Mucosa of descending colon (tissue), 3 donors: ENCODE measurements at regions of chr6 and their contacts with region 1.

Region 1: GRCh38 chr6:139375232-139376016 is 976 bp upstream of the CITED2 start:
- DNase-seq: peak; percentile 93 to 96 (median 94)
- ATAC-seq: peak; percentile 83
- H3K4me3 ChIP-seq: peak overlapping the region; percentile 95
- H3K4me1 ChIP-seq: peaks cover 16% of the 10 kb centered on the region
- CTCF ChIP-seq: no peak

Region 2: DNA sequence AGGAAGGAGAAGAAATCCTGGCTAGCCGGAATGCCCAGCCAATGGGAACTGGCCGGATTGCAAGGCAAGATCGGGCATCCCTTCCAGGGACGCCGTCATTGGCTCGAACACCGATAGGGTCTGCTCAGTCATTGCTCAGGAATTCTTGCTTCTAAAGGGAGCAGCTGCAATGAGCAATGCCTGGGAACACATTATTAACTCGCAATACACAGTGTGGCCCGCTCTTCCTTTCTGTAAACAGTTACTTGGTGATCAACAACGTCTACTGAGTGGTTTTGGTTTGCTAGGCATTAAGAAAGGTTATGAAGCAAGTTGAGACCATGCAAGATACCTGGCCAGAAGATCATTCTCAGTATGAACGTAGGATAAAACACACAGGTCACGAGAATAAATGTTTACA is 164.4 kb after region 1 on chr6:
- intact Hi-C with region 1: loop called in 1 of 2 experiments (anchors 10 kb)
- DNase-seq: peak; percentile 34 to 54 (median 42)
- ATAC-seq: peak; percentile 35
- H3K4me3 ChIP-seq: no peak overlapping the region
- H3K4me1 ChIP-seq: peaks cover 34% of the 10 kb centered on the region
- CTCF ChIP-seq: no peak

Region 3: DNA sequence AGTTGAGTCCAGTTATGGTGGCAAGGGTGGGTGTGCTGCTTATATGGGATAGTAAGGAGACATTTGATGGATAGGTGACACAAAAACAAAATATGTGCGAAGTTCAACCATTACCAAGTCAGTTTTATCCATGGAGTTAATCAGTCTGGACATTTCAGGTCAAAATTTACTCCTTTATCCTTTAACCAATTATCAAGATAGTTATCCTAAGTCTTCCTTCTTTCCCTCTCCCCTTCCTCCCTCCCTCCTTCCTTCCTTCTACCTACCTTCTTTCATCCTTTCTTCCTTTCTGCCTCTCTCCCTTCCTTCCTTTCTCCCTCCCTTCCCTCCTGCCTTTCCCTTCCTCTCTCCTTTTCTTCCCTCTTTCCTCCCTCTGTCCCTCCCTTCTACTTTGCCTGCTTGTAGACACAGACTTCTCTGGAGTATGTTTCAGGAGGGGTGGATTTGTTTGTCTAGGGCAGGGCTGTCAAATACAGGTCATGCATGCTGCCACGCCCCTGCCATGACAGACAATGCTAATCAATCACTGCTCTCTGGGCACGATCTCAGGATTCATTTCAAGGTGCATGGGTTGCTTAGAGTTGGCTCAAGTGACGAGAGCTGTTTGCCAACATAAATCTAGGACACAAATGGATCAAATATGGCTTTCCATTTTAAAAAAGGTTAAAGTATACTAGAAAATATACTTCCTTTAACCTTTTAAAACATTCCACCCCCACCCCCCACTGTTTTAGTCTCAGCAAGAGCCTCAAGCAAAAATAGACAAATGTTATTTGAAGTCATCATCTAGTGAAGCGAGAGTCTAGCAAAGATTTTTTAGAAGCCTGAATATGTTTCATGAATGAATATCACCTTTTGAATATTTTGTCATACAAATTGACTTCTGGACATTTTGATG is 280.6 kb after region 1 on chr6:
- intact Hi-C with region 1: loop called in 1 of 2 experiments (anchors 10 kb)
- DNase-seq: peak; percentile 79 to 96 (median 81)
- ATAC-seq: peak; percentile 96
- H3K4me3 ChIP-seq: no peak overlapping the region
- H3K4me1 ChIP-seq: peaks cover 19% of the 10 kb centered on the region
- CTCF ChIP-seq: no peak

Region 4: DNA sequence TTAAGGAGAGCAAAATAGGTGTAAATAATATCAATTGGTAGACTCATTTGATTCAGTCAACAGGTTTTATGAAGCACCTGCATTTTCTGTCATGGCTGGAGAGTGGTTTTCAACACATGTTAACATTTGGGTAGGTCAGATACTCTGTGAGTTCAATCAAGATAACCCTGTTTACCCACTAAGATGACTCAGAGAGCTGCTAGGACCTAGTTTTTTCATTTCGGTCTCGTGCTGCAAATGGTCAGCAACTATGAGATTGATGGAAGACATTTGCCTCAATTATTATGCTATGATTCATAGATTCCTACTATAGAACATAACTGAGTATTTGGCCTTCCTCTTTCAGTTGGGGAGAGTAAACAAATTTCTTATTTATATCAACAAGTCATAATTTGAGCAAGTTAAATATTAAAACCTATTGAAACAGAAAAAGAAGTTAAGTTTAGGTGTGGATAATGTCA is 390.4 kb after region 1 on chr6:
- intact Hi-C with region 1: no loop called
- DNase-seq: no peak
- ATAC-seq: peak; percentile 72
- H3K4me3 ChIP-seq: no peak overlapping the region
- H3K4me1 ChIP-seq: no peaks in the 10 kb centered on the region
- CTCF ChIP-seq: no peak

Region 5: GRCh38 chr6:139852488-139853140 is 477.2 kb after region 1 on chr6:
- intact Hi-C with region 1: loop called (anchors 5 to 10 kb)
- DNase-seq: peak in 1 of 3 donors; percentile 41
- ATAC-seq: peak; percentile 92
- H3K4me3 ChIP-seq: no peak overlapping the region
- H3K4me1 ChIP-seq: peaks cover 23% of the 10 kb centered on the region
- CTCF ChIP-seq: no peak

Region 6: GRCh38 chr6:139981768-139982181 is 606.4 kb after region 1 on chr6:
- intact Hi-C with region 1: loop called in 1 of 2 experiments (anchors 10 kb)
- DNase-seq: peak in 1 of 3 donors; percentile 63
- ATAC-seq: peak; percentile 86
- H3K4me3 ChIP-seq: no peak overlapping the region
- H3K4me1 ChIP-seq: peaks cover 12% of the 10 kb centered on the region
- CTCF ChIP-seq: no peak